CD14-positive monocyte (primary cell): ENCODE measurements at regions of chr6 and their contacts with region 1.

Region 1: DNA sequence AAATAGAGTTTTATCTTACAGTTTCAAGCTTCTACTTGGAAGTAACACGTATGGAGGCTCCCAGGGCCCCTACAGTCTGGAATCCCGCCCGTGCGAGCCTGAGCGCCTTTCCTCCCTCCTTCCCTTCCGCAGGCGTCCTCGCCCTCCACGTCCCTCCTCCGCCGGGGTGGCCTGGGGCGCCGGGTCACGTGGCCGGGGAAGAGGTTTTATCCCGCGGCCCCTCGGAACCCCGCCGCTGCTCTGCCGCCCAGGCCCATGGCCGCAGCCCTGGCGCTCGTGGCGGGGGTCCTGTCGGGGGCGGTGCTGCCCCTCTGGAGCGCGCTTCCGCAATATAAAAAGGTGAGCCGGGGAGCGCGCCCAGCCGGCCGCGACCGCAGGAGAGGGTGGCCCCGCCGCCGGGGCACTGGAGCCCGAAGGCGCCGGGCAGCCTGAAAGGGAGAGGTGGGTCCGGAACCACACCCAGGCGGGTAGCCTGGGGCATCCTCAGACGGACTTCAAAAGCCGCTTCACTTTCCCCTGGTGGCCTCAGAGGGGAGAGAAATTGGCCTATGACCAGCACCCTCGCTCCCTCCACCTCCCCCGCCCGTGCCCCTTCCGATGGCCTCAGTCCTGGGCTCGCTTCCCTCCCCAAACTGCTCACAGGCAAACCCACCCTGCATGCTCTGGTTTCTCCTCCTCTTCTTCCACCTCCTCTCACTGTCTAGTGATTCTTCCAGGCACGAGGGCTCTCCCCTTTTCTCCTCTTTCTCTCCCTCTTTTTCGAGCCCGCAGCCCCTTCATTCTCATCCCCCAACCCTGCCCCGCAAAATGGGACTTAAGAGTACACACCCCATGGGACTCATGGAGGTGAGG is at the start of gene CLPSL2:
- DNase-seq: no peak
- H3K4me3 ChIP-seq: peak within 1 kb of the TSS; percentile 18 to 74 (median 29)
- H3K4me3 Mint-ChIP-seq: peak within 1 kb of the TSS; percentile 72 to 86
- H3K27ac ChIP-seq: no peak within 1 kb of the TSS
- H3K27ac Mint-ChIP-seq: no peak within 1 kb of the TSS
- H3K4me1 ChIP-seq: peaks cover 7 to 9% of the 10 kb centered on the region in 2 donors
- H3K4me1 Mint-ChIP-seq: peaks cover 9% of the 10 kb centered on the region
- H3K27me3 ChIP-seq: peaks cover 0 to 17% of the 10 kb centered on the region in 2 donors
- H3K27me3 Mint-ChIP-seq: peaks cover 18 to 25% (median 24%) of the 10 kb centered on the region in 3 donors
- CTCF ChIP-seq: no peak
- polyA plus RNA-seq, gene CLPSL2: not detected

Region 2: GRCh38 chr6:35706468-35706867 is 70.1 kb before region 1 on chr6:
- intact Hi-C with region 1: no loop called
- DNase-seq: peak in 1 of 3 donors; percentile 33
- H3K4me3 ChIP-seq: no peak overlapping the region
- H3K4me3 Mint-ChIP-seq: no peak overlapping the region
- H3K27ac ChIP-seq: no peak overlapping the region
- H3K27ac Mint-ChIP-seq: no peak overlapping the region
- H3K4me1 ChIP-seq: peaks cover 7 to 14% of the 10 kb centered on the region in 2 donors
- H3K4me1 Mint-ChIP-seq: peaks cover 17% of the 10 kb centered on the region
- H3K27me3 ChIP-seq: no peaks in the 10 kb centered on the region
- H3K27me3 Mint-ChIP-seq: no peaks in the 10 kb centered on the region
- CTCF ChIP-seq: no peak

Region 3: GRCh38 chr6:35742797-35743196 is 33.8 kb before region 1 on chr6:
- intact Hi-C with region 1: no loop called
- DNase-seq: no peak
- H3K4me3 ChIP-seq: no peak overlapping the region
- H3K4me3 Mint-ChIP-seq: no peak overlapping the region
- H3K27ac ChIP-seq: no peak overlapping the region
- H3K27ac Mint-ChIP-seq: no peak overlapping the region
- H3K4me1 ChIP-seq: peaks cover 7 to 8% of the 10 kb centered on the region in 2 donors
- H3K4me1 Mint-ChIP-seq: peaks cover 15% of the 10 kb centered on the region
- H3K27me3 ChIP-seq: no peaks in the 10 kb centered on the region
- H3K27me3 Mint-ChIP-seq: no peaks in the 10 kb centered on the region
- CTCF ChIP-seq: no peak

Region 4: GRCh38 chr6:35955976-35956375 is 179.4 kb after region 1 on chr6:
- intact Hi-C with region 1: loop called in 1 of 2 experiments (anchors 10 kb)
- DNase-seq: no peak
- H3K4me3 ChIP-seq: no peak overlapping the region
- H3K4me3 Mint-ChIP-seq: no peak overlapping the region
- H3K27ac ChIP-seq: no peak overlapping the region
- H3K27ac Mint-ChIP-seq: peak overlapping the region in 1 of 7 donors; percentile 8
- H3K4me1 ChIP-seq: peaks cover 0 to 7% of the 10 kb centered on the region in 2 donors
- H3K4me1 Mint-ChIP-seq: peaks cover 14% of the 10 kb centered on the region
- H3K27me3 ChIP-seq: no peaks in the 10 kb centered on the region
- H3K27me3 Mint-ChIP-seq: peaks cover 0 to 2% (median 0%) of the 10 kb centered on the region in 3 donors
- CTCF ChIP-seq: peak; percentile 21

Region 5: GRCh38 chr6:36373368-36374019 is 596.9 kb after region 1 on chr6:
- intact Hi-C with region 1: no loop called
- DNase-seq: no peak
- H3K4me3 ChIP-seq: no peak overlapping the region
- H3K4me3 Mint-ChIP-seq: no peak overlapping the region
- H3K27ac ChIP-seq: no peak overlapping the region
- H3K27ac Mint-ChIP-seq: no peak overlapping the region
- H3K4me1 ChIP-seq: peaks cover 22 to 28% of the 10 kb centered on the region in 2 donors
- H3K4me1 Mint-ChIP-seq: peaks cover 31% of the 10 kb centered on the region
- H3K27me3 ChIP-seq: no peaks in the 10 kb centered on the region
- H3K27me3 Mint-ChIP-seq: peaks cover 3 to 6% (median 3%) of the 10 kb centered on the region in 3 donors
- CTCF ChIP-seq: no peak